ENCODE measurements at regions of chr22 and their contacts with region 1.

Region 1: GRCh38 chr22:24005201-24005600 is at the start of gene GSTT4:
- DNase-seq: no peak
- ATAC-seq: no peak
- H3K4me3 Mint-ChIP-seq: no peak within 1 kb of the TSS
- H3K27ac Mint-ChIP-seq: no peak within 1 kb of the TSS
- H3K4me1 Mint-ChIP-seq: peaks cover 1% of the 10 kb centered on the region
- H3K27me3 Mint-ChIP-seq: peaks cover 2% of the 10 kb centered on the region
- total RNA-seq, gene GSTT4: not detected

Region 2: GRCh38 chr22:23938328-23939016 is 66.7 kb before region 1 on chr22:
- CTCF ChIA-PET with region 1: no interaction called
- POLR2A ChIA-PET with region 1: no interaction called
- intact Hi-C with region 1: loop called (anchors 5 kb)
- DNase-seq: no peak
- ATAC-seq: no peak
- H3K4me3 Mint-ChIP-seq: no peak overlapping the region
- H3K27ac Mint-ChIP-seq: no peak overlapping the region
- H3K4me1 Mint-ChIP-seq: no peaks in the 10 kb centered on the region
- H3K27me3 Mint-ChIP-seq: no peaks in the 10 kb centered on the region

Measured in activated CD4-positive, alpha-beta T cell treated with anti-CD3 and anti-CD28 coated beads for 36 hours (primary cell).